PC-9 (cell line): ENCODE measurements at regions of chr11 and their contacts with region 1.

Region 1: DNA sequence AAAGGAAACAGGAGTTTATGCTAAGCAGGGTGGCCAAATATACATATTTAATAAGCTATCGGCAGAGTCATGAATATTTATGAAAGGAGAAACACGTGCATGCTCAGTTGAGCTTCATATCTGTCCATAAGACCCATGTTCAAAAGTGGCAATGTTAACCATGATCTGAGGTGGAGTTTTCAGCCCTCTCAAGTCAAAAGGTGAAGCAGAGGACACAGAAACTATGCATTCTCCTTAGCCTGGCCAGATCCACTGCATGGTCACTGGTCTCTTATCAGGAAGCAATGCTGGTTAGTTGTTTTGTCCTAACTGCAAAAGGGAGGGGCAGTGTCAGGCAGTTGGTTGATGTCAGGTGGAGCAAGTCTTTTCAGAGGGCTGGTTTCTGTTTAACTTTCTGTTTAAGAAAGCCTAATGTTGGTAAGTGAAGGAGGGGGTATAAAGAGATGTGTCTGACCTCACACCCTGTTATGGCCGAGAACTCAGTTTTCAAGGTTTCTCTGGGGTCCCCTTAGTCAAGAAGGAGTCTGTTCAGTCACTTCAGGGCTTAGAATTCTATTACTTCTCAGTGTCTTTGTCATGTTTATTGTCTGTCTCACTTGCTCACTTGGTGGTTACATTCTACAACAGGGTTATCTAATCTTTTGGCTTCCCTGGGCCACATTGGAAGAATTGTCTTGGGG is 5.5 kb upstream of the SELENOH start:
- DNase-seq: peak; percentile 51 to 68
- H3K4me3 ChIP-seq: no peak overlapping the region
- H3K27ac ChIP-seq: peak overlapping the region; percentile 55
- H3K4me1 ChIP-seq: peaks cover 35% of the 10 kb centered on the region
- H3K27me3 ChIP-seq: no peaks in the 10 kb centered on the region
- CTCF ChIP-seq: no peak

Region 2: DNA sequence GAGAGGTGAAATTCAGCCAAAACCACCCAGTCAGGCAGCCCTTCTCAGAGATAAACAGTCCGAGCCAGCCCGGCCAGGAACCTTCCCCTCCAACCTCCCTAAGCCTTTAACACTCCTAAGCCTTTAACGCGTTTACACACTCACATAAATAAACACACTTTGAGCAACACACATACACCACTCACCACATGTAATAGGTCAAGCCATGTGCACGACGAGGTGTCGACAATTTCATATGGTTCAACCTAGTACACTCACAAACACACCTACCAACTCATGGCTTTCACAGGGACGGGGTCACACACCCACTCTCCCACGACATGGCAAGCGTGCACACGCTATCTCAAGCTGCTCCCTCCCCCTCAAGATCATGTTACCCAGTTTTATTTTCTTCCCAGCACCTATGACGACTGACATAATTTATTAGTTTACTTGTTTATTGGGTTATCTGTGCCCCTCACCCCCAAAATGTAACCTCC is 235.7 kb before region 1 on chr11:
- CTCF ChIA-PET with region 1: interaction called, 21 read pairs
- POLR2A ChIA-PET with region 1: no interaction called
- intact Hi-C with region 1: no loop called
- DNase-seq: no peak
- H3K4me3 ChIP-seq: peak overlapping the region; percentile 52; the same call in 1 of the 2 replicates
- H3K27ac ChIP-seq: no peak overlapping the region
- H3K4me1 ChIP-seq: peaks cover 57% of the 10 kb centered on the region
- H3K27me3 ChIP-seq: no peaks in the 10 kb centered on the region
- CTCF ChIP-seq: no peak

Region 3: GRCh38 chr11:57704932-57705331 is 30.8 kb before region 1 on chr11:
- CTCF ChIA-PET with region 1: interaction called, 11 read pairs
- POLR2A ChIA-PET with region 1: interaction called, 46 read pairs
- intact Hi-C with region 1: no loop called
- DNase-seq: no peak
- H3K4me3 ChIP-seq: no peak overlapping the region
- H3K27ac ChIP-seq: no peak overlapping the region
- H3K4me1 ChIP-seq: no peaks in the 10 kb centered on the region
- H3K27me3 ChIP-seq: no peaks in the 10 kb centered on the region
- CTCF ChIP-seq: no peak

Region 4: DNA sequence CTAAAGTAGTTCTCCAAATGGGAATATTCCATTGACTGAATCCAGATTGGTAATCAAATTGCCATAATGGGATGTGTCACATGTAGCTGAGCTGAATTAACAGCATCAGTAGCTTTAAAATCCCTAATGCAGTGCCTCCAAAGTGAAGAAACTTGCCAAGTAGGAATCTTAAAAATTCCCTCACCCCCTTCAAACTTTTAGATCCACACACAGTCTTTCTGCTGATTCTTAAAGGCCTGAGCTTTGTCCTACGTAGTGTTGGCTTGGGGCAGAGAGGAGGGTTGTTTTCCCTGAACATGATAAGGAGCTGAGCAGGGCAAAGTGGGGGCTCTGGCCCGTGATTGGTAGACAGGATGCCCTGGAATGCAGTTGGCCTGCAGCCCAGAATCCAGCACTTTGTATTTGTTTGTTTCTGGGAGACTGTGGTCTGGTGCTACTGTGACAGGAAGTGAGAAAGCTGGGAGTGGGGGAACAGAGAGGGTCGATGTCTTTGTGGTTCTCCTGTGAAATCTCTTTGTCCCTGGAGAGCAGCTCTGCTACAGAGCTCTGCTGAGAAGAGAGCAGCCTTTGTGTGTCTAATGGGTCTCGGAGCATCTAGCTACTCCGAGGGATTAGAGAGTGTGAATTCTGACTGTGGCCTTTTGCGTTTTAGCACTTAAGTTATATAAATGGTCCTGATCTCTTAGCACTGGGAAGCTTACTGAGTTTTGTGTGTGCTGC is 42.7 kb after region 1 on chr11:
- CTCF ChIA-PET with region 1: no interaction called
- POLR2A ChIA-PET with region 1: interaction called, 10 read pairs
- intact Hi-C with region 1: loop called (anchors 1 kb)
- DNase-seq: peak; percentile 98 to 99
- H3K4me3 ChIP-seq: peak overlapping the region; percentile 50; the same call in 1 of the 2 replicates
- H3K27ac ChIP-seq: peak overlapping the region; percentile 93
- H3K4me1 ChIP-seq: peaks cover 93% of the 10 kb centered on the region
- H3K27me3 ChIP-seq: no peaks in the 10 kb centered on the region
- CTCF ChIP-seq: no peak